GM18951 (cell line): ENCODE measurements at regions of chr1 and their contacts with region 1.

Region 1: DNA sequence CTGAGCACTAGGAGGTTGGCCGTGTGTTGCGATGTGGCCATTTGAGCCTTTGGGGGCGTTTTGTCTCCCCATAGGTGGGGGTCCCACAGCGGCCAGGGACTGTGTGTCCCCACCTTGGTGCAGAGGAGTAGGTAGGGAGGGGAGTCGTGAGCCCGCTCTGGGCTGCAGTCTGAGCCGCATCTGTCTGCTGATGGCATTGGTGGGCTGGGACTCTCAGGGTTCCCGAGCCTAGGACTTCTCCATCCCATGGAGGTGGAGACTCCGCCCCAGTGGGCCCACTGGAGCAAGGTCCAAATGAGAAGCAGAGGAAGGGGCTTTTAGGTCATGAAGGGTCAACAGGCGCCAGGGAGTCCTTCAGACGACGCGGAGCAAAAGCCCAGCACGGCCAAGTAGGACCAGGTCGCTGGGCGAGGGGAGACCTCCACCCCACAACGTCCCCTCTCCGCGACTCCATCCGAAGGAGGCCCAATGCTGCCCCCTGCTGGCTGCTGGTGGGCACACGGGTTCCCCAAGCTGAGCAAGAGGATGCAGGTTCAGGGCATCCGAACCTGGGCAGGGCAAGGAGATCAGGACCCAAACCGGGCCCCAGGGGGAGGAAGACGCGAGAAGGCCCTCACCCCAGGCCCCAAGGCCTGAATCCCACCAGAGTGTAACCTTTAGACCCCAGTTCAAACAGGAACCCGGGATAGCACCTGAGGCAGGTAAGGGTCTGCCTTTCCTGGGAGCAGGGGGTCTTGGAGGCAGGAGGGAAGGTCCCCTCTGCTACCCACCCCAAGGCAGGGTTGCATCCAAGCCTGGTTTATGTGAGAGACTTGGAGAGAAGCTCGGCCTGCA is 14.9 kb downstream of the TTC34 start:
- POLR2A ChIP-seq: no peak

Region 2: GRCh38 chr1:2194898-2195673 is 591.5 kb before region 1 on chr1:
- in situ Hi-C with region 1: loop called (anchors 25 kb)
- POLR2A ChIP-seq: peak; percentile 48

Region 3: DNA sequence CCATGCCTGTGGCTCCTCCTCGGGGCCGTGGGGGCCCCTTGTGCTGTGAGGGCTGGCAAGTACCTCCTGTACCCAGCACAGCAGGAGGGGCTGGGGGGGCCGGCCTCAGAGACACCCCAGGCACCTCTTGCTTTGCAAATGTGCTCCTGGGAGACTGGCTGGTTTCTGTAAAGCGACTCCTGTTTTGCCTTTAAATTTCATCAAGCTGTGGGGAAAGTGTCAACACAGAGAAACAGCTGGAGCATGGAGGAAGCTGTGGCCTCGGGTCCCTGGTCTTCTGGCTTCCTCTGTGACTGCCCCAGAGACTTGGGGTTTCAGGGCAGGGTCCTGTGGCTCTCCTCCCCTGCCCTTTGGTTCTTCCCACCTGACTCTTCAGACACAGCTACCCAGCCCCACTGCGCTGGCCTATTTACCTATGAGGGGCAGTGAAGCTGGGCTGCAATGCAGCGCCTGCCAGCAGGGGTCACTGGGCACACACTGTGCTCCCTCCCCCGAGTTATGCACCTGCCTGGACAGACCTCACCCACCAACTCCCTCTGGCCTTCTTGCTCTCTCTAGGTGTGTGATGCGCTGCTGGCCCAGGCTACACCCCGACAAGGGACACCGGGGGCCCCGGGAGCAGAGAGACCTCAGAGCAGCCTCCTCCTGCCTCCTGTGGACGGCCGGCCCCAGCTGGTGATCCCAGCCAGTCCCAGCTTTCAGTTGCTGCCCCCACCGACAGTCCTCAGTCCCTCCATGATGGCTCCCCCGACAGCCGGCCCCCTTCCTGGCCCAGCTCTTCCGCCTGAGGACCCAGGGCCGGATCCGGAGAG is 356.6 kb before region 1 on chr1:
- in situ Hi-C with region 1: loop called (anchors 10 kb)
- POLR2A ChIP-seq: no peak

Region 4: GRCh38 chr1:2561898-2562545 is 224.5 kb before region 1 on chr1:
- in situ Hi-C with region 1: no loop called
- POLR2A ChIP-seq: peak; percentile 26